Mammary epithelial cell (primary cell): ENCODE measurements at regions of chr19 and their contacts with region 1.

Region 1: GRCh38 chr19:1445185-1445931 is 4.6 kb upstream of the APC2 start:
- DNase-seq: peak; percentile 49
- H3K4me3 ChIP-seq: peak overlapping the region in 1 of 3 experiments; percentile 6
- H3K27ac ChIP-seq: no peak overlapping the region
- H3K4me1 ChIP-seq: peaks cover 31% of the 10 kb centered on the region
- H3K27me3 ChIP-seq: peaks cover 23% of the 10 kb centered on the region
- CTCF ChIP-seq: peak; percentile 58 to 69

Region 2: DNA sequence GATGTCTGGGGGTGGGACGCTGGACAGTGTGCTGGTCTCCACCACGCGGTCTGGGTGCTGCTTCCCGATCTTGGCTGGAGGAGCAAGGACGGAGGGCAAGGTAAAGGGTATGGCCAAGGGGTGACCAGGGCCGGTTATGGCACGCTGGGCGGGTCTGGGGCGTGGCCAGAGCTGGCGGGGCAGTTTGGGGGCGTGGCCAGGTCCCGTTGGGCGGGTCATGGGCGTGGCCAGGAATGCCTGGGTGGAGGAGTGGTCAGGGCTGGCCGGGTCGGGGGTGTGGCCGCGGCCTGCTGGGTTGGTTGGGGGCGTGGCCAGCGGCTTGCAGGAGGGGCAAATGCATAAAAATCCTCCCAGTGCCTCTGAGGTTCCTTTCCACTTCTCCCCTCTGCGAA is 322.4 kb before region 1 on chr19:
- CTCF ChIA-PET with region 1: no interaction called
- dilution Hi-C with region 1: loop called (anchors 10 kb)
- in situ Hi-C with region 1: no loop called
- intact Hi-C with region 1: no loop called
- DNase-seq: peak; percentile 69
- H3K4me3 ChIP-seq: no peak overlapping the region
- H3K27ac ChIP-seq: no peak overlapping the region
- H3K4me1 ChIP-seq: peaks cover 14% of the 10 kb centered on the region
- H3K27me3 ChIP-seq: no peaks in the 10 kb centered on the region
- CTCF ChIP-seq: no peak

Region 3: DNA sequence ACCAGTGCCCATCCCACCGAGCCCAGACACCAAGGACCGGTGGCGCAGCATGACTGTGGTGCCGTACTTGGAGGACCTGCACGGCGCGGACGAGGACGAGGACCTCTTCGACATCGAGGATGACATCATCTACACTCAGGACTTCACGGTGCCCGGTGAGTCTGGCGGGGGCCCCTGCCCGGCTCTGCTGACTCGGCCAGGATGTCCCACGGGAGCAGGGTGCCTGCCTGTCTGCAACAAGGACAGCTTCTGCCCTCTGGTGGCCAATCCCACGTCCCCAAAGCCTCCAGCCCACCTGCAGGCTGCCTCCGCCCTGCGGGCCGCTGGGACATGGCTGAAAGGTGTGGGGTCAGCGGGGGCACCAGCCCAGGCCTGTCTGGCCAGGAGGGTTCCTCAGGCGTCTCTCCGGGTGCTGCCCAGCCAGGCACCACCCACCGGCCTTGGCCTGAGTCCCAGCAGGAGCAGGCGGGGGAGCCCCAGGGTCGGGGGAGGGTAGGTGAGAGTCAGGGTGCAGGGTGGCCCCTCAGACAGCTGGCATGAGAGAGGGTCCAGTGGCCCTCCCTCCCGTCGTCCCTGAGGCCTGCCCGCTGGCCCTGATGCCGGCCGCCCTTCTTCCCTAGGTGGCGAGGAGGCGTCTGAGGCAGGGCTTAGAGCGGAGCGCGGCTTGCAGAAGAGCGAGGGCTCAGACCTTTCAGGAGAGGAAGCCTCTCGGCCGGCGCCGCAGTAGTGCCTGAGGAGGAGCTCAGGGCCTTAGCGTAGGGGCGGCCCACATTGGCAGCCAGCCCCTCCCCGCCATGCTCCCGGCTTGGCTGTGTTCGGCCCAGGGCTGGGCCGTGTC is 222.1 kb before region 1 on chr19:
- CTCF ChIA-PET with region 1: no interaction called
- dilution Hi-C with region 1: no loop called
- in situ Hi-C with region 1: no loop called
- intact Hi-C with region 1: no loop called
- DNase-seq: no peak
- H3K4me3 ChIP-seq: no peak overlapping the region
- H3K27ac ChIP-seq: no peak overlapping the region
- H3K4me1 ChIP-seq: no peaks in the 10 kb centered on the region
- H3K27me3 ChIP-seq: no peaks in the 10 kb centered on the region
- CTCF ChIP-seq: peak; percentile 29 to 58

Region 4: GRCh38 chr19:1324806-1325567 is 120.4 kb before region 1 on chr19:
- CTCF ChIA-PET with region 1: no interaction called
- dilution Hi-C with region 1: loop called (anchors 5 kb)
- in situ Hi-C with region 1: no loop called
- intact Hi-C with region 1: no loop called
- DNase-seq: peak; percentile 57
- H3K4me3 ChIP-seq: peak overlapping the region in 2 of 3 experiments; percentile 24 to 30
- H3K27ac ChIP-seq: no peak overlapping the region
- H3K4me1 ChIP-seq: peaks cover 10% of the 10 kb centered on the region
- H3K27me3 ChIP-seq: peaks cover 2% of the 10 kb centered on the region
- CTCF ChIP-seq: no peak

Region 5: GRCh38 chr19:1373534-1374249 is 71.7 kb before region 1 on chr19:
- CTCF ChIA-PET with region 1: no interaction called
- dilution Hi-C with region 1: loop called (anchors 5 kb)
- in situ Hi-C with region 1: no loop called
- intact Hi-C with region 1: no loop called
- DNase-seq: no peak
- H3K4me3 ChIP-seq: no peak overlapping the region
- H3K27ac ChIP-seq: no peak overlapping the region
- H3K4me1 ChIP-seq: no peaks in the 10 kb centered on the region
- H3K27me3 ChIP-seq: no peaks in the 10 kb centered on the region
- CTCF ChIP-seq: no peak

Region 6: GRCh38 chr19:1455336-1456120 is 10.2 kb after region 1 on chr19:
- CTCF ChIA-PET with region 1: interaction called, 17 read pairs
- dilution Hi-C with region 1: no loop called
- in situ Hi-C with region 1: no loop called
- intact Hi-C with region 1: no loop called
- DNase-seq: peak; percentile 61
- H3K4me3 ChIP-seq: no peak overlapping the region
- H3K27ac ChIP-seq: no peak overlapping the region
- H3K4me1 ChIP-seq: peaks cover 21% of the 10 kb centered on the region
- H3K27me3 ChIP-seq: peaks cover 17% of the 10 kb centered on the region
- CTCF ChIP-seq: no peak

Region 7: DNA sequence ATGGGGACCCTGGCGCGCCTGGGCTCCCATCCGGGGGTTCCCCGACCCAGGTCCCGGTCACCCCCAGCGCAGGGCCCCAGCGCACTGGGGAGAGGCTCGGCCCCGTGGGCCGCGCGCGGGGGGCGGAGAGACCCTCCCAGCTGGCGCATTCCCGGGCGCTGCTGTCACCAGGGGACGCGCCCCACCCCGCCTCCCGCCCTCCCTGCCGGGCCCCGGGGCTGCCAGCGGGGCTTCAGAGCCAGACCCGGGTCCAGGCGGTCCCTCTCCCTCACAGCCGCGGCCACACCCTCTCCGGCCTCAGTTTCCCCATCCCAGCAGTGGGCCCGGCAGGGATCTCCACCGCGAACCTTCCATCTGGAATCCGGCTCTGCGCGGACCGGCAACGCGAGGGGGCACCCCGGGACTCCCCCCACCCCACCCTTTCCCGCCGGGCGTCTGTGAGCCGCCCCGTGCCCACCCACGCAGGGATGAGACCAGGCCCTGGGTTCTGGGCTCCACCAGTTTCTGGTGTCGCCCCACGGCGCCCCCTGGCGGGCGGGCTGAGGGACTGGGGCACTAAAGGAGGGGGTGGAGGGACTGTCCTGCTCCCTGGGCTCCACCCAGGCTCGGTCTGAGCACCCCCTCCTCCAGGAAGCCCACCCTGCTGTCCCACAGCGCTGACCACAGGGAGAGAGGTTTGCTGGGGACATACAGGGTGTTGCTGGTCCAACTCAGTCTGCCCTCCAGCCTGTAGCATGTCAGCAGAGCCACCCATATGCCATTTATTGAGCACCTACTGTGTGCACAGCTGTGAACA is 68.3 kb after region 1 on chr19:
- CTCF ChIA-PET with region 1: no interaction called
- dilution Hi-C with region 1: no loop called
- in situ Hi-C with region 1: no loop called
- intact Hi-C with region 1: loop called (anchors 2 kb)
- DNase-seq: peak; percentile 42
- H3K4me3 ChIP-seq: peak overlapping the region; percentile 52 to 77 (median 66)
- H3K27ac ChIP-seq: peak overlapping the region; percentile 10
- H3K4me1 ChIP-seq: peaks cover 9% of the 10 kb centered on the region
- H3K27me3 ChIP-seq: no peaks in the 10 kb centered on the region
- CTCF ChIP-seq: peak; percentile 56 to 92

Region 8: DNA sequence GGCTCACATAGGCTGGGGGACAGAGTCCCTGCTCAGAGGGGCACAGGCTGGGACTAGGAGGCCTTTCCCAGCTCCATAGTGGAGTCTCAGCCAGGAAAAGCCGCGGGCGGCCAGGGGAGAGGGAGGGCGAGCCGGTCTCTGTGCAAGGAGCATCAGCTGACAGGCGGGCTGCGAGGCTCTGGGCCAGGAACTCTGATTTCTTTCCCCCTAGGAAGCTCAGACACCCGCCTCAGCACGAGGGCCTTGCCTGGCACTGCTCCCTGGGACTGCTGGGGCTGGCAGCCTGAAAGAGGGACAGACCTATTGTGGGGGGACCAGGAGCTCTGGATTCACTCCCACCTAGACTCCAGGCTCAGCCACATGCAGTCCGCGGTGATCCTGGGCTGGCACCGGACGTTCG is 76.3 kb after region 1 on chr19:
- CTCF ChIA-PET with region 1: no interaction called
- dilution Hi-C with region 1: loop called (anchors 5 kb)
- in situ Hi-C with region 1: no loop called
- intact Hi-C with region 1: no loop called
- DNase-seq: no peak
- H3K4me3 ChIP-seq: no peak overlapping the region
- H3K27ac ChIP-seq: no peak overlapping the region
- H3K4me1 ChIP-seq: no peaks in the 10 kb centered on the region
- H3K27me3 ChIP-seq: peaks cover 13% of the 10 kb centered on the region
- CTCF ChIP-seq: no peak